ENCODE measurements at regions of chr1 and their contacts with region 1.

Region 1: GRCh38 chr1:202716654-202717053 is 6.4 kb upstream of the SYT2 start:
- DNase-seq: no peak
- H3K4me3 ChIP-seq: no peak overlapping the region
- H3K27ac ChIP-seq: no peak overlapping the region
- H3K27me3 ChIP-seq: peaks cover 0 to under 1% (median 0%) of the 10 kb centered on the region in 45 donors
- CTCF ChIP-seq: no peak

Region 2: DNA sequence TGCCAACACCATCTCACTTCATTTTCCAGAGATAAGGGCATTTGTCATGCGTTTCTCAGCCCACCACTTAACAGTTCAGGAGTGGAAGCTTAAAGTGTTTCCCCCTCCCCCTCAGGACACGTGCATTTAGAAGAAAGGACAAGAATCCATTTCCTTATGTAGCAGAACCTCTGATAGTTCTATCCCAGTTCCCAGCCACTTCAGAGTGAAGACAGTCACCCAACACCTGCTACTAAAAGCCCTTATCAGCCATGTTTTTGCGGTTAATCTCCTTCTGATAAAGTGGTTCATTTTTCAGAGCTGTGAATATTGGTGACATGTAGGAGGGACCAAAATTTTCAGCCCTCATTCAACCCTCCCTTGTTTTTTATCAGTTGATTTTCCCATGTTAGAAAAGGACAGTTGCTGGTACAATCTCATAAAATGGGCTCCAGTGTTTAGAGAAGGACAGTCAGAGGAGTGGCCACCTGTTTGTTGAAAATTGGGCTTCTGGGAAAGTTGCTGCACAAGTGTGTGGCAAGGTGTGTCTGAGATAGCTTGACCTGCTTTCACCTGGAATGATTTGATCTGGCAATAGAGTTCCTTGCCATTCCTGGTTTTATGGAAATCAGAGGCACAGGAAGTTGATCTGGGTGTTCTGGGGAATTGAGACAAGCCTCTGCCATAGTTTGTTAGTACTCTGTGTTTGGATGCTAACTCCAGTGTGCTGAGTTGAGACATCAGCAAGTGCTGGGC is 254.1 kb before region 1 on chr1:
- intact Hi-C with region 1: loop called in 1 of 2 experiments (anchors 5 kb)
- DNase-seq: no peak
- H3K4me3 ChIP-seq: no peak overlapping the region
- H3K27ac ChIP-seq: peak overlapping the region in 15 of 59 donors; percentile 4 to 55 (median 29)
- H3K27me3 ChIP-seq: no peaks in the 10 kb centered on the region
- CTCF ChIP-seq: no peak

Region 3: GRCh38 chr1:202625416-202626360 is 91.0 kb before region 1 on chr1:
- intact Hi-C with region 1: no loop called
- DNase-seq: peak in 9 of 10 donors; percentile 29 to 73 (median 58)
- H3K4me3 ChIP-seq: no peak overlapping the region
- H3K27ac ChIP-seq: no peak overlapping the region
- H3K27me3 ChIP-seq: peaks cover 0 to 8% (median 0%) of the 10 kb centered on the region in 45 donors
- CTCF ChIP-seq: peak in 53 of 56 donors; percentile 28 to 74 (median 61)

Region 4: DNA sequence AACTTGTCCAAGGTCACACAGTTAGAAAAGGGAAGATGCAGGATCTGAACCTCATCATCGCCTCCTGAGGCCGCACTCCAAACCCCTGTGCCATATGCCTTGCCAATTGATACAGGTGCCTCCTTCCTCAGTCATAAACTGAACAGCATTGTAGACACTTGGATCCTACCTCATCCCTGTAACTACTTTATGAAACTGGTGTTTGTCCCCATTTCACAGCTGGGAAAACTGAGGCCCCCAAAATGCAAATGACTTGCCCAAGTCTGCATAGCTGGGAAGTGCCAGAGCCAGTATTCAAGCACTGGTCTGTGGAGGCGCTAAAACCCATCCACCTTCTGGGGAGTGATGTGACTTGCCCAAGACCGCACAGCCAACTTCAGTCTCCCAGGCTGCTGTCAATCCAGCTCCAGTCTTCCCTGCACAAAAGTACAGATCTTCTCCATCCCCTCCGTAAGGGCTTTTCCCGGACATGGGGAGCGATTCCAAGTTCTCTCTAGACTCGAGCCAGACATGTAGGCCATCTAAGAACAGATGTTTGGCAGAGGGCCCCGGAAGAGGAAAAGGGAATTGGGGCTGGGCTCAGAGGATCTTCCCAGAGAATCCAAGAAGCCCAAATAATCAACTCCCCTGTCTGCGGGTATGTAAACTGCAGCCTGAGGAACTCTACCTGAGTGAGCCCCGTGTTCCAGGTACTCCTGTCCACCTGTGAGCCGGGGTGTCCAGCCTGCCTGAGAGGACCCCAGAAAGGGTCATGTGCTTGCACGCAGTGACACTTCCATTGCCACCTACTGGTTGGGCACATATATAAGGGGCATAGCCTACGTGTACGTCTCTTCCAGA is 66.9 kb before region 1 on chr1:
- intact Hi-C with region 1: no loop called
- DNase-seq: no peak
- H3K4me3 ChIP-seq: no peak overlapping the region
- H3K27ac ChIP-seq: no peak overlapping the region
- H3K27me3 ChIP-seq: peaks cover 0 to 6% (median 0%) of the 10 kb centered on the region in 45 donors
- CTCF ChIP-seq: no peak